Esophagus squamous epithelium (tissue), 5 donors: ENCODE measurements at regions of chr19 and their contacts with region 1.

Region 1: GRCh38 chr19:44570984-44571684 is 41.7 kb upstream of the CEACAM20 start:
- DNase-seq: no peak
- H3K4me3 ChIP-seq: no peak overlapping the region
- H3K27ac ChIP-seq: no peak overlapping the region
- H3K4me1 ChIP-seq: no peaks in the 10 kb centered on the region
- H3K27me3 ChIP-seq: peaks cover 0 to 42% (median 0%) of the 10 kb centered on the region in 4 donors
- CTCF ChIP-seq: peak in 5 of 6 experiments; percentile 54 to 71 (median 60)
- POLR2A ChIP-seq: no peak

Region 2: DNA sequence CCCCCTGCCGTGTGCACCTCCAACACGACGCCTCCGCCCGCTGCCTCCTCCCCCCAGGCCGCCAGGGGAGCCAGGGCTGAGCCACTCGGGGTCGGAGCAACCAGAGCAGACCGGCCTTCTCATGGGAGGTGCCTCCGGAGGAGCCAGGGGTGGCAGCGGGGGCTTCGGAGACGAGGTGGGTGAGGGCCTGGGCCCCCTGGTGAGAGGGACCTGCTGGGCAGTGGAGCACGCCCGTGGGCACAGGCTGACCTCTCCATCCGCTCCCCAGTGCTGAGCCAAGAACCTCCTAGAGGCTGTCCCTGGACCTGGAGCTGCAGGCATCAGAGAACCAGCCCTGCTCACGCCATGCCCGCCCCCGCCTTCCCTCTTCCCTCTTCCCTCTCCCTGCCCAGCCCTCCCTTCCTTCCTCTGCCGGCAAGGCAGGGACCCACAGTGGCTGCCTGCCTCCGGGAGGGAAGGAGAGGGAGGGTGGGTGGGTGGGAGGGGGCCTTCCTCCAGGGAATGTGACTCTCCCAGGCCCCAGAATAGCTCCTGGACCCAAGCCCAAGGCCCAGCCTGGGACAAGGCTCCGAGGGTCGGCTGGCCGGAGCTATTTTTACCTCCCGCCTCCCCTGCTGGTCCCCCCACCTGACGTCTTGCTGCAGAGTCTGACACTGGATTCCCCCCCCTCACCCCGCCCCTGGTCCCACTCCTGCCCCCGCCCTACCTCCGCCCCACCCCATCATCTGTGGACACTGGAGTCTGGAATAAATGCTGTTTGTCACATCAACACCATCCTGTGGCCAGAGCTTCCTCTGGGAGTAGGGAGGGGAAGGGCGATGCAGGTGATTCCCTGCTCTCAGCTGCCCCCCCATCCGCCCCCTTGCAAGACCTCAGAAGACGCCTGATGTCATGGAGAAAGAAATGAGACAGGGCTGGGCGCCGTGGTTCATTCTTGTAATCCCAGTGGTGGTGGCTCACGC is 249.8 kb after region 1 on chr19:
- intact Hi-C with region 1: loop called (anchors 10 kb)
- DNase-seq: no peak
- H3K4me3 ChIP-seq: peak overlapping the region in 1 of 4 donors; percentile 6
- H3K27ac ChIP-seq: peak overlapping the region in 3 of 4 donors; percentile 38 to 82 (median 71)
- H3K4me1 ChIP-seq: peaks cover 4 to 20% (median 4%) of the 10 kb centered on the region in 3 donors
- H3K27me3 ChIP-seq: peaks cover 0 to 18% (median 0%) of the 10 kb centered on the region in 4 donors
- CTCF ChIP-seq: no peak
- POLR2A ChIP-seq: no peak